ENCODE measurements at regions of chr10 and their contacts with region 1.

Region 1: DNA sequence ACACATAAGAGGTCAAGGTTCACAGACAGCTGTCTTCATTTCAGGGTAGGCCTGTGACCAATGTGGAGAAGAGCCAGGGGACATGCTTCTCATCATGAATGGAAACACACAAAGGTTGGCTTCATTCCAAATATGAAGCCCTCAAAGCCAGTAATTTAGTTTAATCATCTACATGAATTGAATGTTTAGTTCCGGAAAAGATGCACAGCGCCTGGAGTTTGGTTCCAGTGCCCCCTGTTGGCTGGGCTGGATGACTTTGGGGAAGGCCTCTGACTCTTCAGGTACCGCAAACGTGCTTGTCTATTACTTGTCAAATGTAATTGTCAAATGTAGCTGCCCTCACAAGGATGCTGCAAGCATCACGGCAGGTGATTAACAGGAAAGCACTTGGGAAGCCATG is 130.7 kb downstream of the ADRA2A start:
- H3K4me3 Mint-ChIP-seq: no peak overlapping the region
- H3K27ac Mint-ChIP-seq: no peak overlapping the region
- H3K4me1 Mint-ChIP-seq: no peaks in the 10 kb centered on the region
- H3K27me3 Mint-ChIP-seq: peaks cover 5% of the 10 kb centered on the region

Region 2: GRCh38 chr10:110746254-110746826 is 461.2 kb before region 1 on chr10:
- intact Hi-C with region 1: loop called (anchors 5 kb)
- H3K4me3 Mint-ChIP-seq: no peak overlapping the region
- H3K27ac Mint-ChIP-seq: no peak overlapping the region
- H3K4me1 Mint-ChIP-seq: peaks cover 9% of the 10 kb centered on the region
- H3K27me3 Mint-ChIP-seq: no peaks in the 10 kb centered on the region

Region 3: DNA sequence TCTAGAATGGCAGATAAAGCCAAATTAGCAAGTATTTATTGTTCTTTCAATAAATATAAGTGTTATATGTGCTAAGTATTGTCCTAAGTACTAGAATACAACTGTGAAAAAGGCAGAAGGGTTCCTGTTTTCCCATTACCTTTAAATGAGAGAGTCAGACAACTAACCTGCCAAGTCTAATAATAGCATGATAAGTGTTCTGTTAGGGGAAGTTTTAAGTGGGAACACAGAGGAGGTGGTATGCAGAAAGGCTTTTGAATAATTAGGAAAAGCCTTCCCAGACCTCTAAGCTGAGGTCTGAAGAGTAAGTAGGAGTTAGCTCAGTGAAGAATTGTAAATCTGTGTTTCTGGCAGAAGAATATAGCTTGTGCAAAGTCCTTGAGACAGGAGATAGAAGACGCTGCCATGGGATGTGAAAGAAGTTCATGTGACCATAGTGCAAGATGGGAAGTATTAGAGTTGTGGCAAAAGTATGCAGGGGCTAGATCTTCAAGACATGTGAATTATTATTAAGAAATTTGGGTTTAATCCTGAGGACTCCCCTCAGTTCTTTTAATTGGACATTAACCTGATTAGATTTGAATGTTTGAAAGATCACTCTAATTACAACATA is 275.6 kb before region 1 on chr10:
- intact Hi-C with region 1: no loop called
- H3K4me3 Mint-ChIP-seq: no peak overlapping the region
- H3K27ac Mint-ChIP-seq: no peak overlapping the region
- H3K4me1 Mint-ChIP-seq: peaks cover 8% of the 10 kb centered on the region
- H3K27me3 Mint-ChIP-seq: no peaks in the 10 kb centered on the region

Region 4: DNA sequence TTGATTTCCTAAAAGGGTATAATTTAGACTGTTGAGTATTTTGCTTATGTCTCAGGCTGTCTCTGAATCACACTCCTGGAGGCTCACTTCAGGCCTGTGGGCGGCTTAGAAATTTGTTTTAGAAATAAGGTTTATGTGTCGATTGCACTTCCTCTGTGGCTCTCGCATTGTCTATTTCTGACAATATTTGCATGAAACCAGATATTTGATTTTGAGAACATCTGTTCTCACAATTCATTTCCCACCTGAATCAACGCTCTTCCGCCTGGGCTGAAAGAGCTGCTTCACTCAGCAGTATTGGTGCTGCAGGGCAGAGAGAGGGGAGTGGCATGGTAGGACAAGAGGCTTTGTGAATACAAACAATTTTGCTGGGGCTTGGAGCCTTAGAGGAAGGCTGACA is 131.3 kb after region 1 on chr10:
- intact Hi-C with region 1: no loop called
- H3K4me3 Mint-ChIP-seq: no peak overlapping the region
- H3K27ac Mint-ChIP-seq: no peak overlapping the region
- H3K4me1 Mint-ChIP-seq: no peaks in the 10 kb centered on the region
- H3K27me3 Mint-ChIP-seq: no peaks in the 10 kb centered on the region

Region 5: DNA sequence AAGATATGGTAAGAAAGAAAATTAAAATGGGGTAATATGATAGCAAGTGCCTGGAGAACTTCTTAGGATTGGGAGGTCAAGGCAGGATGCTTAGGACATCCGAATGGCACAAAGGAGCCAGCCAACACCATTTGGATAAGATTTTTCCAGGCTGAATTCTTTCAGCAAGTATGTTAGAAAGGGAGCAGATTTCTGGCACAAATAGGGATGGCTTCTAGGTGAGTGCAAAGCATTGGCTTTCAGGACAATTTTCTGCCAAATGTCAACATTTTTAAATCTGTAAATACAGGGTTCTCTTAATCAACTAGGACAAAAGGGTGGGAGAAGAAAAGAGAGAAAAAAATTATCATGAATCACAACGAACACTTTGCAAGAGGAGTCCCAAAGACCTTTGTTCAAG is 567.0 kb after region 1 on chr10:
- intact Hi-C with region 1: no loop called
- H3K4me3 Mint-ChIP-seq: no peak overlapping the region
- H3K27ac Mint-ChIP-seq: no peak overlapping the region
- H3K4me1 Mint-ChIP-seq: no peaks in the 10 kb centered on the region
- H3K27me3 Mint-ChIP-seq: no peaks in the 10 kb centered on the region